Endothelial cell of umbilical vein (primary cell): ENCODE measurements at regions of chr15 and their contacts with region 1.

Region 1: GRCh38 chr15:98518823-98519561 is 129.3 kb upstream of the IGF1R start:
- DNase-seq: peak; percentile 64
- H3K4me3 ChIP-seq: no peak overlapping the region
- H3K27ac ChIP-seq: no peak overlapping the region
- H3K4me1 ChIP-seq: no peaks in the 10 kb centered on the region
- H3K27me3 ChIP-seq: no peaks in the 10 kb centered on the region
- CTCF ChIP-seq: peak; percentile 71 to 73
- POLR2A ChIP-seq: no peak

Region 2: GRCh38 chr15:98442379-98442833 is 76.6 kb before region 1 on chr15:
- CTCF ChIA-PET with region 1: no interaction called
- POLR2A ChIA-PET with region 1: no interaction called
- dilution Hi-C with region 1: no loop called
- intact Hi-C with region 1: loop called (anchors 1 kb)
- DNase-seq: peak; percentile 71
- H3K4me3 ChIP-seq: no peak overlapping the region
- H3K27ac ChIP-seq: no peak overlapping the region
- H3K4me1 ChIP-seq: no peaks in the 10 kb centered on the region
- H3K27me3 ChIP-seq: no peaks in the 10 kb centered on the region
- CTCF ChIP-seq: peak; percentile 72 to 80
- POLR2A ChIP-seq: no peak

Region 3: DNA sequence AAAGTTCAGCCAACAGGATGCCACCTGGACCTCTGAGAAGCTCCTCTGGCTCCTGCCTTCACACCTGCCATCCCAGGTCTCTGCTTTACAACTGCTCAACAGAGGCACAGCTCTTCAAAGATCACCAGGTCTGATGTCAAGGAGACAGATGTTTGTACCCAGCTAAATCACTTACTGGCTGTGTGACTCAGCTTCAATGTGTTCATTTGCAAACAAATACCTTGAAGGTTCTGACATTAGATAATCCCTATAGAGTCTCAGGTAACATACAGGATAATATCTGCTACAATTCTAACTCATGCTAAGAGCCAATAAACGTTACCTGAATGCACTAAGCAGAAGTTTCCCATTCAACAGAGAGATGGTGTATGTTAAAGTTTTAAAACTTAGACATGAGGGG is 34.1 kb before region 1 on chr15:
- CTCF ChIA-PET with region 1: no interaction called
- POLR2A ChIA-PET with region 1: no interaction called
- dilution Hi-C with region 1: no loop called
- intact Hi-C with region 1: no loop called
- DNase-seq: no peak
- H3K4me3 ChIP-seq: no peak overlapping the region
- H3K27ac ChIP-seq: no peak overlapping the region
- H3K4me1 ChIP-seq: no peaks in the 10 kb centered on the region
- H3K27me3 ChIP-seq: no peaks in the 10 kb centered on the region
- CTCF ChIP-seq: no peak
- POLR2A ChIP-seq: no peak

Region 4: DNA sequence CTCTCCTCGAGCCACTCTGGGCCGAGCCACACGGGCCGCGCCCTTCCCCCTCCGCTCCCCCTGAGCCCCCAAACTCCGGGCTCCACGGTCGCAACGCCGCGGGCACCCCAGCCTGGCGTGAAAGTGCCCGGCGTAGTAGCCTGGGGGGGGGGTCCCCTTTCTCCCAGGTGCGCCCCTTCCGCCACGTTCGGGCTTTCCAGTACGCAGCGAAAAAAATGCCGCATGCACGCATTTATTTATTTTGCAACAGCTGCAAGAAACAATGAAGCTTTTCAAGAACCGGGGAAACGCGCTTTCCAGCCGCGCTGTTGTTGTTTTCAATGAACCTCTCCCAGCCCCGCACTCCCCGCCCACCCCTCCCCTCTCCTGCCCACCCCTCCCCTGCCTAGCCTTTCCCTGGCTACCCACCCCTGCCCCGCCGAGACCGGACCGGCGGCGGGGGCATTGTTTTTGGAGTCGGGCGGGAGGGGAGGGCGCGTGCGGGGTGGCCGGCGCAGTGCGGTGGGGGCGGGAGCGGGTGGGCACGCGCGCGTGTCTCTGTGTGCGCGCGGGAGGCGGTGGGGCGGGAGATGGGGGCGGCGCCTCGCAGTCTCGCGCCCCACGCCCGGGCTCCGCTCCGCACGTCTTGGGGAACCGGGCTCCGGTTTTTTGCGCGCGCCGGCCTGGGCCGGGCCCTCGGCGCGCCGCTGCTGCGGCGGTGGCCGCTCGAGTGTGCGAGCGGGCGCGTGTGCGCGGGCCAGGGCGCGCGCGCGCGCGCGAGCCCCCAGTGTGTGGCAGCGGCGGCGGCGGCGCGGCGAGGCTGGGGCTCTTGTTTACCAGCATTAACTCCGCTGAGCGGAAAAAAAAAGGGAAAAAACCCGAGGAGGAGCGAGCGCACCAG is 129.0 kb after region 1 on chr15 and contains the start of gene IGF1R:
- CTCF ChIA-PET with region 1: interaction called, 46 read pairs
- POLR2A ChIA-PET with region 1: no interaction called
- dilution Hi-C with region 1: no loop called
- intact Hi-C with region 1: loop called (anchors 1 kb)
- DNase-seq: peak; percentile 85
- H3K4me3 ChIP-seq: peak within 1 kb of the TSS; percentile 67 to 96 (median 75)
- H3K27ac ChIP-seq: peak within 1 kb of the TSS; percentile 62
- H3K4me1 ChIP-seq: peaks cover 12% of the 10 kb centered on the region
- H3K27me3 ChIP-seq: peaks cover 9 to 21% of the 10 kb centered on the region in 2 experiments
- CTCF ChIP-seq: peak in 1 of 2 donors; percentile 0
- POLR2A ChIP-seq: no peak
- total RNA-seq, gene IGF1R: 50.9 and 59.1 TPM in 2 replicates

Region 5: GRCh38 chr15:98727115-98728085 is 208.4 kb after region 1 on chr15:
- CTCF ChIA-PET with region 1: interaction called, 4 read pairs
- POLR2A ChIA-PET with region 1: no interaction called
- dilution Hi-C with region 1: no loop called
- intact Hi-C with region 1: loop called (anchors 1 kb)
- DNase-seq: peak; percentile 92
- H3K4me3 ChIP-seq: no peak overlapping the region
- H3K27ac ChIP-seq: peak overlapping the region; percentile 98
- H3K4me1 ChIP-seq: peaks cover 35% of the 10 kb centered on the region
- H3K27me3 ChIP-seq: no peaks in the 10 kb centered on the region
- CTCF ChIP-seq: no peak
- POLR2A ChIP-seq: no peak

Region 6: DNA sequence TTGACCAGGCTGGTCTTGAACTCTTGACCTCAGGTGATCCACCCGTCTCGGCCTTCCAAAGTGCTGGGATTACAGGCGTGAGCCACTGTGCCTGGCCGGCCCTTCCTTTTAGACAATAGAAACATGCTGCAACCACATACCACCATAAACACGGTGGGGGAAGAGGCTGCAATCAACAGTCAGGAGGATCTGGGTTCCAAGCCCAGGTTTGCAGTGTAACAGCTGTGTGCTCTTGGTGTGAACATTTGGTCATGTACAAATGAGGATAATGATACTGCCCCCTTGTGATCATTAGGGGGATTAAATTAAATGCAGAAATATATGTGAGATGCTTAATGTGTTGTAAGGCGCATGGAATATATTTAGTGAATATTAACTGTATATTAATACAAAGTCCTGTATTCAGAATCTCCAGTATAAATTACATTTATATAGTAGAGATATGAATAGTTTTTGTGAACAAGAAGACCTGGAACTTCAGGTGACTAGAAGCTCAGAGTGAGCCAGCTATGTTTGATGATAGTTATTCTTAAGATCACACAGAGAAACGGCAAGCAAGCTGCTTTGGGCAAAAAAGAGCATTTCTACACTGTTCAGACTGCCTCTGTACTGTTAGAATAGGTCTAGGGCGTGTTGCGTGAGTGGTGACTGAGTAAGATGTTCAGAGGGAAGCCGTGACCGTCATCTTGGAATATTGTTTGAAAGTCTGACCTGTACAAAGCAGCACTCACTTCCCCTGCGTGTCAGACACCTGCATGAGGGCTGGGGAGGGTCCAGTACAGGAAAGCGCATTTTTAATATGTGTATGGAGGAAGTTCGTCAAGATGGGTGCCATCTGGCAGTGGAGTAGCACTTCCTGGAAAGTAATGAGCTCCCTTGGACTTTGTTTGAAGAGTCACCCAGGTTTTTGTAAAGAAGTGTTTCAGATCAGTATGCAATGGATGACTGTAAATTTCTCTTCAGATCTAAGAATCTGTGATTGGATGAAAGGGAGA is 362.8 kb after region 1 on chr15:
- CTCF ChIA-PET with region 1: interaction called, 54 read pairs
- POLR2A ChIA-PET with region 1: no interaction called
- dilution Hi-C with region 1: no loop called
- intact Hi-C with region 1: loop called (anchors 1 kb)
- DNase-seq: peak; percentile 49
- H3K4me3 ChIP-seq: no peak overlapping the region
- H3K27ac ChIP-seq: no peak overlapping the region
- H3K4me1 ChIP-seq: peaks cover 2% of the 10 kb centered on the region
- H3K27me3 ChIP-seq: no peaks in the 10 kb centered on the region
- CTCF ChIP-seq: peak in 1 of 2 donors; percentile 41
- POLR2A ChIP-seq: no peak

Region 7: DNA sequence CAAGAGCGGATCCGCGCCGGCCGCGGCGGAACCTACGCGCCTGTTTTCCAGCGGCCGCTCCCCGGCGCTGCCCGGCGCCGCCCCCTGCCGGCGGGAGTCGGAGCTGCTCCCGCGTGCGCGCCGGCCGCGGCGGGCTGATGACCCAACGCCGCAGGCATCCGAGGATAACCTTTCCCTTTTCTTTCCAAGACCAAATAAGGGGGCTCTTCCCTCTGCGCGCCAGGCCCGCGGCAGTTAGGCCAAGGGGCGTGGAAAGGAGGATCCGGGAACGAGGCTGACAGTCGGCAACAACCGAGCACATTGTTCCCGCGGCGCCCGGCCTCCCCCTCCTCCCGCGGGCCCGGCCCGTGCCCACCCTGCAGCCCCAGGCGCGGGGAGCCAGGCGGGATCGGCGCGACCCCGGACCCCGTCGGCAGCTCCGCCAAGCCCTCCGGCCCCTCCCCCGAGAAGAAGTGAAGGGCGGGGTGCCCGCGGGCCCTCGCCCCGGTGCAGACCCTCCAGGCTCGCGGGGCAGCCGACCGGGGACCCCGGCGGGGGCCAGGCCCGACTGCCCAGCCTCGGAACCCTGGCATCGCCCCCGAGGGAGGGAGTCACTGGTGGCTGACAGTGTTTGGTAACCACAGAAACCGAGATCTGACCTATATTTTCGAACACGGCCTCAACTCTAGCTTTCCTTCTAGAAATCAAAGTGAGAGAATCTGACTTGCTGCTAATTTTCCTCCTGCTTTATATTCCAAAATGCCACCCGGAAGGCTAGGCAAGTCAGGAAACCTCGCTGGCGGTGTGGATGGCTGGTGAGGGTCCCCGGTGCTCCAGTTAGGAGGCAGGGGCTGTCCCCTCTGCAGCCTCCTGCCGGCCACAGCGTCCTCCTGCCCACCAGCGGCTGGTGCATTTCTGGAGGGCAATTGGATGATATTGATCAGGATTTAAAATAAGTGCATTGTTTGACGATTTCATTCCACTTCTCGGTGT is 540.3 kb after region 1 on chr15:
- CTCF ChIA-PET with region 1: interaction called, 34 read pairs
- POLR2A ChIA-PET with region 1: no interaction called
- dilution Hi-C with region 1: no loop called
- intact Hi-C with region 1: loop called (anchors 1 kb)
- DNase-seq: peak; percentile 61
- H3K4me3 ChIP-seq: peak overlapping the region; percentile 34 to 60 (median 40)
- H3K27ac ChIP-seq: peak overlapping the region; percentile 12
- H3K4me1 ChIP-seq: peaks cover 8% of the 10 kb centered on the region
- H3K27me3 ChIP-seq: peaks cover 0 to 5% of the 10 kb centered on the region in 2 experiments
- CTCF ChIP-seq: peak; percentile 56 to 85
- POLR2A ChIP-seq: no peak

Region 8: GRCh38 chr15:99213187-99213811 is 694.3 kb after region 1 on chr15:
- CTCF ChIA-PET with region 1: interaction called, 5 read pairs
- POLR2A ChIA-PET with region 1: no interaction called
- dilution Hi-C with region 1: no loop called
- intact Hi-C with region 1: loop called (anchors 2 kb)
- DNase-seq: peak; percentile 77
- H3K4me3 ChIP-seq: no peak overlapping the region
- H3K27ac ChIP-seq: no peak overlapping the region
- H3K4me1 ChIP-seq: peaks cover 11% of the 10 kb centered on the region
- H3K27me3 ChIP-seq: no peaks in the 10 kb centered on the region
- CTCF ChIP-seq: peak; percentile 79 to 83
- POLR2A ChIP-seq: no peak